HepG2 (cell line): ENCODE measurements at regions of chr2 and their contacts with region 1.

Region 1: DNA sequence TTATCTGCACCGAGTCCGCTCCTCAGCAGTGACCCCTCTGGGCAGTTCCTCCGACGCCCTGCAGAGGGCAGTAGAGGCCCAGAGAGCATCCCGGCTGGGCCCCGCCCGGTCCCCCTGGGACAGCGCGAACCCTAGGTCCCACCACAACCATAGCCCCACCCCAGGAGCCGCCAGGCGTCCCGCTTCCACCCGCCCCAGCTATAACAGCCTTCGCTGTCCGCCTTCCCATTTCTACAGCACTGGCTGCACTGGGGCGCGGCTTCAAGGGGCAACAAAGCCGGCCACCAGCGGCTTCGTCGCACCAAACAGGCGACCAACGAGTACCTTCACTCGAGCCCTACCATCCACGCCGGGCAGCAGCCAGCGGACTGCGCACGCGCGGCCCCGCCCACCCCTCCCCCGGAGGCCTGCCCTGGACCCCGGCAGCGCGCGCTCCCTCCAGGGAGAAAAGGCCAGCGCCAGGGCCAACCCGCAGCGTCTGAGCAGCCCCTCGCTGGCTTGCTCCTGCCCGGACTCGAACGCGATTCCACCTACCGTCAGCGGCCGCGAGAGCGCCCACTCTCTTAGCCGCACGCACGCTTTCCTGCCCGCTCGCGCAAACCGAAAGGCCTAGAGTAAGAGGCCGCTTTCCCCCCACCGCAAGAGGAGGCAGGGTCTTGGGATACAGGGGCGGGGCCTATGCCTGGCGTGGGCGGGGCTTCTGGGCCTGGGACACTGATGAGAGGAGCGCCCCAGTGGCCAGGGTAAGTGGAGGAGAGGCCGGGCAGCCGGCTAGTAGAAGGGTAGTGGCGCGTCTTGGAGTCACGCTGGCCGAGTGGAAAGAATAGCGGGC is at the start of gene NHEJ1:
- DNase-seq: peak; percentile 90
- ATAC-seq: peak; percentile 91
- H3K4me3 ChIP-seq: peak within 1 kb of the TSS; percentile 76 to 94 (median 86)
- H3K27ac ChIP-seq: peak within 1 kb of the TSS; percentile 93
- H3K4me1 ChIP-seq: peaks cover 18% of the 10 kb centered on the region
- H3K27me3 ChIP-seq: no peaks in the 10 kb centered on the region
- CTCF ChIP-seq: peak; percentile 96
- EP300 ChIP-seq: no peak
- POLR2A ChIP-seq: peak; percentile 68 to 93
- RAD21 ChIP-seq: peak; percentile 97
- total RNA-seq, gene NHEJ1: 30.7 and 42.1 TPM in 2 replicates

Region 2: GRCh38 chr2:219126551-219126950 is 33.9 kb before region 1 on chr2:
- CTCF ChIA-PET with region 1: no interaction called
- POLR2A ChIA-PET with region 1: no interaction called
- in situ Hi-C with region 1: no loop called
- intact Hi-C with region 1: no loop called
- DNase-seq: peak; percentile 78
- ATAC-seq: peak; percentile 89
- H3K4me3 ChIP-seq: no peak overlapping the region
- H3K27ac ChIP-seq: no peak overlapping the region
- H3K4me1 ChIP-seq: peaks cover 67% of the 10 kb centered on the region
- H3K27me3 ChIP-seq: no peaks in the 10 kb centered on the region
- CTCF ChIP-seq: no peak
- EP300 ChIP-seq: peak in 1 of 2 experiments; percentile 25; a peak in 1 of 4 replicates
- POLR2A ChIP-seq: no peak
- RAD21 ChIP-seq: no peak

Region 3: DNA sequence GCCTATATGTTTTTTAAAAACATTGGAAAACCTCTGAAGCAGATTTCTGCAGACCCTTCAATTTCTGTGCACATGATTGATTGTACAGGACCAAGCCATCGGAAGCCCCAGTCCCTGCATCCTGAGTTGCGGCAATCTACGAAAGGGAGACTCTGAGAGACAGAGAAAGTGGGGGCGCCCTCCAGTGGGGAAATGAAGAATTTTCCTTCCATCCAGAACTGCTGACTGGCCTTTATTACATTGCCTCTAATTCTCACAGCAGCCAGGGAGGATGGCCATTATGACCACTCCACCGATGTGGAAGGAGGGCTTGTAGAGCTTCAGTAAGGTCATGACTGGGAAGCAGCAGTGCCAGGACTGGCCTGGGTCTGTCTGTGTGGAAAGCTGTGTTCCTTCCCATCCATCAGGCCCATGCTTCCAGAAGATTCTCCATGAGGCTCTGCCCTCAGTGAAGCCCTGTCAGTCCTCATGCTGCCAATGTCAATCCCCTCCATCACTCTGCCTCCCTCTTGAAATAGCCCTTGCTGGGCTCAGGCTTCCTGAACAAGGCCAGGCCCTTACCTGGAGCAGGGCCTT is 192.1 kb after region 1 on chr2:
- CTCF ChIA-PET with region 1: interaction called, 7 read pairs
- POLR2A ChIA-PET with region 1: no interaction called
- in situ Hi-C with region 1: no loop called
- intact Hi-C with region 1: loop called (anchors 1 kb)
- DNase-seq: peak; percentile 55
- ATAC-seq: peak; percentile 89
- H3K4me3 ChIP-seq: no peak overlapping the region
- H3K27ac ChIP-seq: no peak overlapping the region
- H3K4me1 ChIP-seq: no peaks in the 10 kb centered on the region
- H3K27me3 ChIP-seq: peaks cover 0 to 58% of the 10 kb centered on the region in 2 experiments; a peak in 3 of 5 replicates
- CTCF ChIP-seq: peak; percentile 73
- EP300 ChIP-seq: no peak
- POLR2A ChIP-seq: no peak
- RAD21 ChIP-seq: 0 out of 2 replicates have a peak, but pooled peaks have one; percentile 32